ENCODE measurements at regions of chr5 and their contacts with region 1.

Region 1: DNA sequence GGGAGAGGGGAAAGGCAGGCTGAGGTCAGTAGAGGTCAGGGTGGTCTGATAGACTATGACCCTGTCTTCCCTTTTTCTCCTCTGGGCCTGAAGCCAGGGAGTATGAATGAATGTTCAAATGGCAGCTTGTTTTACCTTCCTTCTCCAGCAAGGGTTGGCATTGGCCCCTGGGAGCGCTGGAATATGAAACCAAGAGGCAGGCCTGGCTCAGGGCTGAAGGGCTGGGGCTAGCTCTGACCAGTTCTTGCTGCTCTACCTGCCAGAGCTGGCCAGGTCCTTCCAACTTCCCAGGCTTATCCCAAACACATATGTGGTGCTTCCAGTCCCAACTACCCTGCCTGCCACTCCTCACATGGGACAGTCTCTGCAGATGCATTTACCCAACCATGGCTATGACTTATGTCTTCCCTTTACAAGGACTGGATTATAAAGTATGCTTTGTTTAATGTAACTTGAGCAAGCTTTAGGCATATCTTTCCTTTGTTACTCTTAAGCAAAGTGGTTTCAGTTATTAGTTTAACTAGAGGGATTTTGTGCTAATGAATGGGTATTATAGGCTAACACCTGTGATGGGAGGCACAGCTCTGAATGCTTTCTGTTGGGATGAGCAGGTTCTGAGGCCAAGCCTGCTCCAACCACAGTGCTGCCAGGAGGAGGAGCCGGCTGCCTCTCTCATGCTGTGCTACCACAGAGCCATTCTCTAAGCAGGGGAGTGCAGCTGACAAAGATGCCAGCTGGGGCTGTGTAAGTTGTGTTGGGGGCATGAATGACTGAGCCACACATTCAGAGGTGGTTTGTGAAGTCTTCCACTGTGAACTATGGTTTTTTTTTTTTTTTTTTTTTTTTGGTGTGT is 6.1 kb downstream of the CCNI2 start:
- DNase-seq: no peak
- ATAC-seq: peak; percentile 83
- H3K4me3 ChIP-seq: no peak overlapping the region
- H3K27ac ChIP-seq: no peak overlapping the region
- H3K4me1 ChIP-seq: peaks cover 2% of the 10 kb centered on the region; the same call in 1 of the 2 replicates
- H3K27me3 ChIP-seq: peaks cover 8% of the 10 kb centered on the region
- CTCF ChIP-seq: peak; percentile 40
- POLR2A ChIP-seq: no peak
- RAD21 ChIP-seq: peak; percentile 39

Region 2: DNA sequence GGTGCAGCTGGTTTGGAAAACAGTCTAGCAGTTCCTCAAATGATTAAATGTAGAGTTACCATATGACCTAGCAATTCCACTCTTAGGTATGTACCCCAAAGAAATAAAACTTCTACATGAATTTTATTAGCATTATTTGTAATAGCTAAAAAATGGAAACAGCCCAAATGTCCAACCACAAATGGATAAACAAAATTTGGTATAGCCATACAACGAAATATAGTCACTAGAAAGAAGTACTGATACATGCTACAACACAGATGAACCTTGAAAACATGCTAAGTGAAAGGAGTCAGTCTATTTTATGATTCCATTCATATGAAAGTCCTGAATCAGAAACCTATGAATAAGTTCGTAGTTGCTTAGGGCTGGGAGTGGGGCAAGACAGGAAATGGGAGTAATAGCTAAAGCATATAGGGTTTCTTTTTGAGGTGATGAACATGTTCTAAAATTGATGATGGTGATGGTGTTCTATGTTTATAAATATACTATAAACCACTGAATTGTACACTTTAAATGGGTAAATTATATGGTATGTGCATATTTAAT is 106.6 kb after region 1 on chr5:
- CTCF ChIA-PET with region 1: no interaction called
- POLR2A ChIA-PET with region 1: no interaction called
- dilution Hi-C with region 1: no loop called
- in situ Hi-C with region 1: no loop called
- intact Hi-C with region 1: loop called (anchors 5 kb)
- DNase-seq: peak; percentile 29
- ATAC-seq: no peak
- H3K4me3 ChIP-seq: no peak overlapping the region
- H3K27ac ChIP-seq: no peak overlapping the region
- H3K4me1 ChIP-seq: no peaks in the 10 kb centered on the region
- H3K27me3 ChIP-seq: no peaks in the 10 kb centered on the region
- CTCF ChIP-seq: no peak
- POLR2A ChIP-seq: no peak
- RAD21 ChIP-seq: no peak

Measured in IMR-90 (cell line).